ENCODE measurements at regions of chr6 and their contacts with region 1.

Region 1: DNA sequence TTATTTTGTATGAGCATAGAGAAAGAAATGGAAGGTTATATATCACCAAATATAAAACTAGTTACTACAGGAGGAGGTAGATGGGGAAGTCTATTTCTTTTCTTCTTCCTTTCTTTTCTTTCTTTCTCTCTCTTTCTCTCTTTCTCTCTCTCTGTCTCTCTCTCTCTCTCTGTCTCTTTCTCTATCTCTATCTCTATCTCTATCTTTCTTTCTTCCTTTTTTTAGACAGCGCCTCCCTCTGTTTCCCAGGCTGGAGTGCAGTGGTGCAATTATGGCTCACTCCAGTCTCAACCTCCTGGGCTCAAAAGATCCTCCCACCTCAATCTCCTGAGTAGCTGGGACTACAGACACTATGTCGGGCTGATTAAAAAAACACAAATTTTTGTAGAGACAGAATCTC is 10.2 kb upstream of the SGK1 start:
- DNase-seq: no peak
- H3K4me3 ChIP-seq: no peak overlapping the region
- H3K27ac ChIP-seq: no peak overlapping the region
- H3K4me1 ChIP-seq: no peaks in the 10 kb centered on the region
- H3K27me3 ChIP-seq: no peaks in the 10 kb centered on the region
- CTCF ChIP-seq: no peak

Region 2: DNA sequence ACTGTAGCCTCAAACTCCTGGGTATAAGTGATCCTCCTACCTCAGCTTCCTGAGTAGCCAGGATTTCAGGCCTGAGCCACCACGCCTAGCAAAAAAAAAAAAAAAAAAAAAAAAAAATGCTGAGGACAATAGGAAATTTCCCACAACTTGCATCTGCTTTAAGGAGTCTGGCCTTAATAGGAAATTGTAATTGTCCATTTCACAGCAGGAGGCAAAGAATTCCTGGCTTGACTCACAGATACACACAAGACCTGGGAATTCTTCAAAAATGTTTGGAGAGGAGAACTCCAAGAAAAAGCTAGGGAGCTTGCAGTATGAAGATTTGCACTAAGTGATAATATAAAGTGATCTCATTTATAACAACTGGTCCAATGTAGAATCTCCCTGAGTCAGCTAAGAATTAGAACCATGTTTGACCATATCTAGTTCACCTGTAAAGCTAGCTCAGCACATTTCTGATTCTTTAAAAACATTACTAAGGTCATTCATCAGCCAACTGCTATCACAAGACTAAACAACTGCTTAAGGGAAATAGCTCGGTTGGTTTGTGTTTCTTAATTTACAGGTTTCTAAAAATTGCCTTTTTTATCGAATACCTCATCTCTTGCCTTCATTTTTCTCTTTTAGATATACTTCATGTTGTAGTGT is 195.5 kb before region 1 on chr6:
- CTCF ChIA-PET with region 1: no interaction called
- dilution Hi-C with region 1: no loop called
- in situ Hi-C with region 1: no loop called
- intact Hi-C with region 1: no loop called
- DNase-seq: no peak
- H3K4me3 ChIP-seq: no peak overlapping the region
- H3K27ac ChIP-seq: no peak overlapping the region
- H3K4me1 ChIP-seq: no peaks in the 10 kb centered on the region
- H3K27me3 ChIP-seq: no peaks in the 10 kb centered on the region
- CTCF ChIP-seq: no peak

Region 3: DNA sequence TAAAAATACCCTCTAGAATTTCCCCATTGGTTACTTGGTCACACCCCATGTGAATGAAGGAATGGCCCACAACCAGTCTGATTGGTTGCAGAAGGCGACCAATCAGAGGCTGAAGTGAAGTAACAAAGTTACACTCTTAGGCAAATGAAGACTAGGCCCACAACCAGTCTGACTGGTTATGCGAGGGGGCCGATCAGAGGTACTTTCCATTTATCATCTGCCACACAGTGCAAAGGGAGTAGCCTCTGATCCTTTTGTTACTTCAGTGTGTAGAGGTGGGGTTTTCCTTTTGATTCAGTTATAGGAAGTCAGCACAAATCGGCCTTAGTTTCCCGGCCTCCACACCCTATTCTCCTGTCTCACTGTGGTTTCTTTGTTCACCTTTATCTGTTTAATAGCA is 50.9 kb after region 1 on chr6:
- CTCF ChIA-PET with region 1: no interaction called
- dilution Hi-C with region 1: loop called (anchors 5 kb)
- in situ Hi-C with region 1: no loop called
- intact Hi-C with region 1: no loop called
- DNase-seq: peak; percentile 97
- H3K4me3 ChIP-seq: no peak overlapping the region
- H3K27ac ChIP-seq: peak overlapping the region; percentile 64
- H3K4me1 ChIP-seq: peaks cover 34% of the 10 kb centered on the region
- H3K27me3 ChIP-seq: no peaks in the 10 kb centered on the region
- CTCF ChIP-seq: no peak

Region 4: GRCh38 chr6:134529921-134530320 is 201.8 kb after region 1 on chr6:
- CTCF ChIA-PET with region 1: no interaction called
- dilution Hi-C with region 1: no loop called
- in situ Hi-C with region 1: no loop called
- intact Hi-C with region 1: no loop called
- DNase-seq: peak; percentile 65
- H3K4me3 ChIP-seq: no peak overlapping the region
- H3K27ac ChIP-seq: no peak overlapping the region
- H3K4me1 ChIP-seq: peaks cover 15% of the 10 kb centered on the region
- H3K27me3 ChIP-seq: no peaks in the 10 kb centered on the region
- CTCF ChIP-seq: no peak

Region 5: DNA sequence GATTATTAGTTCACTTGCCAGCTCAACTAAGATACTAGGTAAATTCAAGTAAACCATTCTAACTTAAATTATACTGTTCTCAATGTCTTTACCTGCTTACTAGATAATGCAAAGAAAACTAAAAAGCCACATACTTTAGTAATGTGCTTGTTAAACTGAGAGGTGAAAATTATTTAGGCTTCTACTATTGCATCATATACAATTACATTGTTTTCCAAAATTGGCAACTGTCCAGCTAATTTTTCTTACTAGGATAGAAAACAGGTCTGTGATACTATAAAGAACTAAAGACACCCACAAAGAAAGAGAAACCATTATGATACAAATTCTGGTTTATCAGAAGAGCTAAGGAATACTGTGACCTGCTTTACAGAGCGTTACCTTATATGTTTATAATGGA is 667.4 kb after region 1 on chr6:
- CTCF ChIA-PET with region 1: no interaction called
- dilution Hi-C with region 1: no loop called
- in situ Hi-C with region 1: no loop called
- intact Hi-C with region 1: no loop called
- DNase-seq: no peak
- H3K4me3 ChIP-seq: no peak overlapping the region
- H3K27ac ChIP-seq: no peak overlapping the region
- H3K4me1 ChIP-seq: no peaks in the 10 kb centered on the region
- H3K27me3 ChIP-seq: no peaks in the 10 kb centered on the region
- CTCF ChIP-seq: no peak